Dendritic cell treated with granulocyte-macrophage colony-stimulating factor and Interleukin-4, amounts not matched to agents 40 ng/mL and 50 ng/mL, for 4 days (primary cell): ENCODE measurements at regions of chr15 and their contacts with region 1.

Region 1: GRCh38 chr15:90598031-90598577 is 68.4 kb downstream of the CRTC3 start:
- H3K4me3 Mint-ChIP-seq: no peak overlapping the region
- H3K27ac Mint-ChIP-seq: peak overlapping the region; percentile 78
- H3K4me1 Mint-ChIP-seq: peaks cover 68% of the 10 kb centered on the region
- H3K27me3 Mint-ChIP-seq: no peaks in the 10 kb centered on the region

Region 2: GRCh38 chr15:90376789-90377188 is 221.3 kb before region 1 on chr15:
- intact Hi-C with region 1: no loop called
- H3K4me3 Mint-ChIP-seq: no peak overlapping the region
- H3K27ac Mint-ChIP-seq: peak overlapping the region; percentile 79
- H3K4me1 Mint-ChIP-seq: peaks cover 32% of the 10 kb centered on the region
- H3K27me3 Mint-ChIP-seq: no peaks in the 10 kb centered on the region

Region 3: GRCh38 chr15:90553248-90553745 is 44.8 kb before region 1 on chr15:
- intact Hi-C with region 1: loop called (anchors 5 kb)
- H3K4me3 Mint-ChIP-seq: no peak overlapping the region
- H3K27ac Mint-ChIP-seq: peak overlapping the region; percentile 43
- H3K4me1 Mint-ChIP-seq: peaks cover 47% of the 10 kb centered on the region
- H3K27me3 Mint-ChIP-seq: no peaks in the 10 kb centered on the region

Region 4: DNA sequence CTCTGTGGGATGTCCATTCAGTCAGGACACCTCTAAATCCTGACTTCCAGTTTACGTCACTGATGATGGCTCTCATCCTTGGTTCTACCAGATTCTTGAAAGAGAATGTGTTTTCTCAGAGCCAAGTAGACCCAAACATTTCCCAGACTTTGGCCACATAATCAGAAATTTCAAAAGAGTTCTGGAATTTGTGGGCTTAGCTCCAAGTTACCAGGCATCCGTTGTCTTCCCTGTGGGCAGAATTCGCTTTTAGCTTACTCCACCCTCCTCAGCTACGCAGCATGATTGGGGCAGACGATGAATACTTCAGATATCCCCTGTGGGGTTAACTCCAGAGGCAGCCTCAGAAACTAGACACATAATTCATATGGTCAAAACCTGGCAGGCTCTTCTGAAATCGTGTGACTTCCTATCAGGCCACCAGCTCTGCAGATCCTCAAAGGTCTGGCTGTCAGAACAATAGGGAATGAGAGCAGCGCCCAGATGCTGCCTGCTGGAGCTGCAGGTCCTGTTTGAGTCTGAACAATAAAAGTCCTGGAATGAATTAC is 37.8 kb before region 1 on chr15:
- intact Hi-C with region 1: loop called (anchors 5 kb)
- H3K4me3 Mint-ChIP-seq: no peak overlapping the region
- H3K27ac Mint-ChIP-seq: no peak overlapping the region
- H3K4me1 Mint-ChIP-seq: peaks cover 73% of the 10 kb centered on the region
- H3K27me3 Mint-ChIP-seq: no peaks in the 10 kb centered on the region